Heart right ventricle (tissue), 16 donors: ENCODE measurements at regions of chr16 and their contacts with region 1.

Region 1: DNA sequence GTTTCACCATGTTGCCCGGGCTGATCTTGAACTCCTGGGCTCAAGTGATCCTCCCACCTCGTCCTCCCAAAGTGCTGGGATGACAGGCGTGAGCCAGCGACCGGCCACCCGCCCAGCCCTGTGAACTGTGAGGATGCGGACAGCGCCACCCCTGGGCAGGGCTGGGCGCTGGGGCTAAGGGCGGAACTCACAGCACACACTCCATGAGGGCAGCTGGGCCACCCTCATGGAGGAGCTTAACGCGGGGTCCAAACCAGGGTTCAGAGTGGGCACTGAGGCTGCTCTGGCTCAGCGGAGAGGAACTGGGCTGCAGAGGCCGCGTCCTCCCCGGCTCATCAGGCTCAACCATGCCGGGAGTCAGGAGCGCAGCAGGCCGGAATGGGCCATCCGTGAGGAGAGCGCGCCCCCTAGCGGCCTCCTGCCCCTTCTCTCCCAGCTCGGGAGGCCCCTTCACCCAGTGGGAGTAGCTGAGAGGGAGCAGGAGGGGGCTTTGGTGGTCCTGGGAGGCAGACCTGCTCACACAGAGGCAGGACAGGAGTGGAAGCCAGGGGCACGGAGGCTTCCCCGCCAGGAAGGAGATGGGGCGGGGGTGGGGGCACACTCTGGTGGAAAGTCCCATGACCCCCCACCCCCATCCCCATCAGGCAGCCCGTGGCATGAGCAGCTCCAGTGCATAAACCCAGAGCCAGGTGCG is 13.8 kb downstream of the CORO7 start:
- DNase-seq: peak; percentile 79 to 89
- ATAC-seq: peak; percentile 93 to 97 (median 95)
- H3K4me3 ChIP-seq: peak overlapping the region in 1 of 10 donors; percentile 26
- H3K27ac ChIP-seq: no peak overlapping the region
- H3K4me1 ChIP-seq: peaks cover 0 to 11% (median 4%) of the 10 kb centered on the region in 9 donors
- H3K27me3 ChIP-seq: no peaks in the 10 kb centered on the region
- CTCF ChIP-seq: peak; percentile 80 to 95 (median 91)

Region 2: DNA sequence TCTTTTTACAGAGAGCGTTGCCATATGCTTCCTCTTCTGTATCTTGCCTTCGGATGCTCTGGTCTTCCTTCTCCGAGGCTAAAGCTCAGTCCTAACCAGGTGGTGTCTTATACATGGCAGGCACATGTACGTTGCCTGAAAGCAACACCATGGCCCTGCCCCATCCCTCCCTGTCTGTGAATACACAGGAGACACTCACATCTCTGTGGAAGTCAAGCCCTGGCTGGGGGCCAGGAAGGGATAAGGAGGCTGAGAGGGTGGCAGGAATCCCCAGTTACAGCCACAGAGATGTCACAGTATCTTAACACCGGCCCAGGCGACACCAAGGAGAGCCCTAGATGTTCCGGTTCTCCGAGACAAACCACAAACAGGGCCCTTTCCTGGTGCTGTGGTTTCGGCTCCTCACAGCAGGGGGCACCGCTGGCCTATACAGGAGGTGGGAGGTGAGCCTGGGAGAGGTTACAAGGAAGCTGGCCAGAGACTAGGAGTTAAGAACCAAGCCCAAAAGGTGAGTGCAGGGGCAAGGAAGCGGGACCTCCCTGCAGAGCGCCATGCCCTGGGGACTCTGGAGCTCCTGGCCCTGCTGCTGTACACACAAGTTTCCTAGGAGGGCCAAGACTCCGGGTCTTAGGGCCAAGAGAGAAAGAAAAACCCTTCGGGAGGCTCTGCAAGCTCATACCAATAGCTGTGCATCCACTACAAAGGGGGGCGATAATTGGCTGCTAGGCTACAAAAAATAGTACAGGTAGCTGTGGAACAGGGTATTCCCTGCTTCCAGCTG is 202.4 kb before region 1 on chr16:
- intact Hi-C with region 1: loop called in 4 of 10 experiments (anchors 5 to 10 kb)
- DNase-seq: peak; percentile 66 to 69
- ATAC-seq: peak; percentile 45 to 86 (median 78)
- H3K4me3 ChIP-seq: no peak overlapping the region
- H3K27ac ChIP-seq: peak overlapping the region in 2 of 10 donors; percentile 3 to 9
- H3K4me1 ChIP-seq: peaks cover 0 to 19% (median 8%) of the 10 kb centered on the region in 9 donors
- H3K27me3 ChIP-seq: no peaks in the 10 kb centered on the region
- CTCF ChIP-seq: peak; percentile 29 to 82 (median 72)

Region 3: GRCh38 chr16:4288148-4288921 is 114.3 kb before region 1 on chr16:
- intact Hi-C with region 1: loop called in 9 of 10 experiments (anchors 5 to 10 kb)
- DNase-seq: peak; percentile 79 to 83
- ATAC-seq: peak; percentile 79 to 86 (median 81)
- H3K4me3 ChIP-seq: no peak overlapping the region
- H3K27ac ChIP-seq: no peak overlapping the region
- H3K4me1 ChIP-seq: peaks cover 5 to 33% (median 27%) of the 10 kb centered on the region in 9 donors
- H3K27me3 ChIP-seq: peaks cover 0 to 3% (median 0%) of the 10 kb centered on the region in 7 donors
- CTCF ChIP-seq: peak; percentile 93 to 99 (median 96)

Region 4: GRCh38 chr16:4293822-4294457 is 108.6 kb before region 1 on chr16:
- intact Hi-C with region 1: loop called in 9 of 10 experiments (anchors 5 to 10 kb)
- DNase-seq: peak; percentile 51 to 52
- ATAC-seq: peak; percentile 74 to 88 (median 80)
- H3K4me3 ChIP-seq: peak overlapping the region in 2 of 10 donors; percentile 6 to 18
- H3K27ac ChIP-seq: peak overlapping the region in 8 of 10 donors; percentile 2 to 67 (median 40)
- H3K4me1 ChIP-seq: peaks cover 10 to 44% (median 36%) of the 10 kb centered on the region in 9 donors
- H3K27me3 ChIP-seq: no peaks in the 10 kb centered on the region
- CTCF ChIP-seq: no peak

Region 5: GRCh38 chr16:4358831-4359561 is 43.6 kb before region 1 on chr16:
- intact Hi-C with region 1: loop called (anchors 1 to 2 kb)
- DNase-seq: peak; percentile 58 to 78
- ATAC-seq: peak; percentile 43 to 84 (median 72)
- H3K4me3 ChIP-seq: no peak overlapping the region
- H3K27ac ChIP-seq: no peak overlapping the region
- H3K4me1 ChIP-seq: no peaks in the 10 kb centered on the region
- H3K27me3 ChIP-seq: no peaks in the 10 kb centered on the region
- CTCF ChIP-seq: peak; percentile 88 to 96 (median 94)